CD8-positive, alpha-beta memory T cell (primary cell): ENCODE measurements at regions of chr3 and their contacts with region 1.

Region 1: DNA sequence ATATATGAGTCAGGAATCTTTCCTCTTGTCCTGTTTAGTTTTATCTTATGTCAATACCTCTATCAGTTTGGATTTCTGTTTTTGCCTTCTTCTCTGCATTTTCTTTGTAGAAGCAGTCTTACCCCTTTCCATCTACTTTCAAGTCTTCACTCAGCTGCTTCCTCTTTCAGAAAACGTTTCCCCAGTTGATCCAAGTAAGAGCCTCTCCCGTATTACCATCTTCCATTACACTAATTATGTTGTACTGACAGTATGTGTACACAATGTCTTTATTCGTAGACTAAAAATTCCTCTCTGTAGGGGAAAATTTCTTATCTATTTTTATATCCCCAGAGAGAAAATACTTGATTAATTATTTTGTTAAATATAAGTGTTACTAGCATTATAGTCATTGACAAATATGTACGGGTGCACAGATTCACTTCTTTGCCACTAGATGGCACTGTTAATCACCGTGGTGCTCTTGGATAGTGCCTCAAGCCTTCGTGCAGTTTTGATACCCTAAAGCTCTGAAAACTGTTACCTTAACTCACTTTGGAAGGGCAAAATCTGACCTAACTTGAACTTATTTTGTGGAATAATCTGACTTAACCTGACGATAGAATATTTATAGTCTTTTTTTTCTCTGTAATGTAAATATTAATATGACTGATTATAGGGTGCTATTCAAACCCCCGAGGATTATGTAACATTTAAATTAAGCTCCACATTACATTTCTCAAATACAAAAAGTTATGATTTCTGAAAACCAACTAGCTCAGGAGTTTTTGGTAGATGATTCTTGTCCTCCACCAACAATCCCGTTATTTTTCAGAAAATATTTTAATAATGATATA is 74.2 kb upstream of the POU1F1 start:
- DNase-seq: peak in 4 of 5 donors; percentile 2 to 52 (median 42)
- H3K4me3 ChIP-seq: no peak overlapping the region
- H3K4me3 Mint-ChIP-seq: no peak overlapping the region
- H3K27ac ChIP-seq: no peak overlapping the region
- H3K27ac Mint-ChIP-seq: no peak overlapping the region
- H3K4me1 ChIP-seq: no peaks in the 10 kb centered on the region
- H3K4me1 Mint-ChIP-seq: no peaks in the 10 kb centered on the region
- H3K27me3 ChIP-seq: no peaks in the 10 kb centered on the region
- H3K27me3 Mint-ChIP-seq: peaks cover 2 to 20% of the 10 kb centered on the region in 2 donors

Region 2: DNA sequence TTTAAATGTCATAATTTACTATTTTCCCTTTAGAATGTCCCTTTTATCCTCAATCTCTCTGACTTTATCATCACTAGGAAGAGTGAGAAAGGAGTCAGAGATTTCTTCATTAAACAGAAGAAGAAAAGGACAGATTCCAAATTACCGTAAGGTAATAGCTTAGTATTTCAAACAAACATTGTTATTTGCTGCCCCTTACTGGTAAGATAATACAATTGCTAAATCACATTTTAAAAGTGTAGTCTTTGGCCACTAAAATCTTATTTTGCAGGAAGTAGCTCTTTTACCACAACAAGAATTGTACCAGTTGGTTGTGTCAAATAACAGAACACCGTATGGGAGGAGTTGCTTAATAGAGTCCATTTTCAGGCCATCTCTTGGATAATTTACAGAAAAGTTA is 654.5 kb after region 1 on chr3:
- CTCF ChIA-PET with region 1: interaction called, 16 read pairs
- POLR2A ChIA-PET with region 1: no interaction called
- DNase-seq: peak in 2 of 5 donors; percentile 34 to 41
- H3K4me3 ChIP-seq: no peak overlapping the region
- H3K4me3 Mint-ChIP-seq: no peak overlapping the region
- H3K27ac ChIP-seq: no peak overlapping the region
- H3K27ac Mint-ChIP-seq: no peak overlapping the region
- H3K4me1 ChIP-seq: no peaks in the 10 kb centered on the region
- H3K4me1 Mint-ChIP-seq: peaks cover 5 to 21% (median 13%) of the 10 kb centered on the region in 3 donors
- H3K27me3 ChIP-seq: no peaks in the 10 kb centered on the region
- H3K27me3 Mint-ChIP-seq: peaks cover 3 to 15% of the 10 kb centered on the region in 2 donors